ENCODE measurements at regions of chr2 and their contacts with region 1.

Region 1: DNA sequence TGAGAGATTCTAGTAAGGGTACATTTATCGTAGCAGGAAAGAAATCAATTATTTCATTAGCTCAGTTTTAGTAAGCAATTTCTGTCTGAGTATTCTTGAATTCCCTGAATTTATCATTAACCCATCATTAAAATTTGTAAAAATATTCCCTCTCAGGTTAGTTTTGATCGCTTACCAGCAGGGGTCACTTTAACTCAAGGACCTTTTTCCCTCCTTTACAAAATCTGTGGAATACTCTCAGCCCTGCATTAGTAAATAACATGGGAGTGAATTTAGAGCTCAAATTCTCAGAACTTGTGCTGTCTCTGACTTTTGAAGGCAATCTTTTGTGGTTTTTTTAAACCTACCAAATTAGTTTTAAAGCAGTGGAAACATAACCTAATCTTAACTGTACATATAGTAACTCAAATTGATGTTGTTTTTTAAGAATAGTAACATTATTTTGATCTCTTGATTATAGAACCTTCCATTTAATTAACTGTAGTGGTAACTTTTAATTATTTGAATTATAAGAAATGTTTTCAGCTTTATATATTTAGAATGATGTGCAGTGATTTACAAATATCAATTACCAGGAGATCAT is 97.2 kb downstream of the AGPS start:
- DNase-seq: no peak
- H3K4me3 ChIP-seq: no peak overlapping the region
- H3K27ac ChIP-seq: no peak overlapping the region
- H3K4me1 ChIP-seq: no peaks in the 10 kb centered on the region
- H3K27me3 ChIP-seq: no peaks in the 10 kb centered on the region
- CTCF ChIP-seq: peak in 1 of 3 experiments; percentile 36

Region 2: DNA sequence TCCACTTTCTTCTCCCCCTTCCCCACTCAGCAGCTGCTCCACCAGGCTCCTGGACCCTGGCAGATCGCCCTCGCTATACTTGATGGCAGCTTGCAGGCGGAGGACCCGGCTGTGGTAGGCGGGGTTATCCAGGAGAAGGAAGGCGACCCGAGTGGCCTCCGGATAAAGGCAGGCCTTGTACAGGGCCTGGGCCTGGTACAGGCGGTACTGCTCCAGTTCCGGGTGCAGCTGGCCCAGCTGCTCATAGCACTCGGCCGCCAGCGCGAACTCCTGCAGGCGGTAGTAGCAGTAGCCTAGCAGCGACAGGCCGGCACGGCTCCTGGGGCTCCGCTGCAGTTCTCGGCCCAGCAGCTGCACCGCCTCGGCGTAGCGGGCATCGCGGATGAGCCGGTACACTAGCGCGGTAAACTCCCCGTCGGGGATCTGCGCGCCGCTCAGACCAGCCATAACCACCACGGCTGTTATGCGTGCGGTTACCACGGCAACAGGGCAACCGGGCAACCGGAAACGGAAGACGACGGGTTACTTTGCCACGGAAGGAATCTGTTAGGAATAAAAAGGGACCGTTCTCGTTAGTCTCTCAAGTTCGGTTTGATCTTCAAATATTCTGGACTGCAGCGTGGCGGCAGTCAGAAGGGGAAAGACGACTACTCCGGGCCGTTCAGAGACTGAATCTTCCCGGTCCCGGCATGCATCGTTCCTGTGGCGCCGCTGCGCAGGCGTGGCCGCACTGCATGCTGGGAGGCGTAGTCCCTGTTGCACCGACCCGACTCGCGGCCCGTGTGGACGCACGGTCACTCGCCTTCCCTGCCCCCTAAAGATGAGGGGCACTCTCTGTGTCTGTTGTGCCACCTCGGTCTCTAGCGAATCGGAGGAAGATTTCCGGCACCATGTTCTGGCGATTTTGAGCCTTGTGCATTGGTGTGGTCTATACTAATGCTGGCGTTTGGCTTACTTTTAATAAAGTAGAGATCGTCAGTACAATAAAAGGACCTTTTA is 128.7 kb after region 1 on chr2:
- intact Hi-C with region 1: no loop called
- DNase-seq: peak; percentile 68 to 95
- H3K4me3 ChIP-seq: peak overlapping the region; percentile 65 to 86
- H3K27ac ChIP-seq: peak overlapping the region; percentile 89 to 96
- H3K4me1 ChIP-seq: no peaks in the 10 kb centered on the region
- H3K27me3 ChIP-seq: no peaks in the 10 kb centered on the region
- CTCF ChIP-seq: no peak

Region 3: DNA sequence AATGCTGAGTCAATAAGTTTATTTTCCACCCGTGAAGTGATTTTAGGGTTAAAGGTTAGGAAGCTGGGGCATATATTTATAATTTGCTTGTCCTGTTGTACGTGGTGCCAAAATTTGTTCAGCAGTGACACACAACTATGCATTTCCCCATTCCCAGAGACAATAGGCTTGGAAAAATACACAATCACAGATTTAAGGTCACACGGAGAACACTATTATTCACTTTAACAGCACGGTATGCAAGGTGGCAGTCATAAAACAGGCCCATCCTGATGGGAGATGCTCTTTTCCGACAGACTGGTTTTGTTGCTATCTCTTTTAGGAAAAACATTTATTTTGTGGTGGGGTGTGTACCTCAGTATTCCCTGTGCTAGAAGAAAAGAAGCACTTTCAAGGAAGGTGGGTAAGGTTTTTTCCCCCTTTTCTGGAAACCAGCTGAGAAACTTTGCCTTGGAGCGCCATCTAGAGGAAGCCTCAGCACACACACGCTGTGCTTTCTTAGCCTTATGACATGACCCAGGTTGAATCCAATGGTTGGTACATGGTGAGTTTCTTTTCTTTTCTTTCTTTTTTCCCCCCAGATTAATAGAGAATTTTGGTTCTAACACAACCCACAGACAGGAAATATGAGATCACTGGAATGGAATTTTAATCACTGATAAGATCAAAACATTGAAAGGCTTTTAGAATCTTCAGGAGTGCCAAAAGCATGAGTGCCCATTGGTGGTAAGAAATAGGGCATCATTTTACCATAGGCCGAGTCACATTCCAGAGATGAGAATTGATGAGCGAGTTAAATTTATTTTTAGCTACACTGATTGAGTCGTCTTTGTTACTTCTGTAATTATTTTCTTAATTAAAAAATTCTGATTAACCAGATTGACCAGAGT is 234.8 kb after region 1 on chr2:
- intact Hi-C with region 1: loop called (anchors 10 kb)
- DNase-seq: no peak
- H3K4me3 ChIP-seq: no peak overlapping the region
- H3K27ac ChIP-seq: no peak overlapping the region
- H3K4me1 ChIP-seq: no peaks in the 10 kb centered on the region
- H3K27me3 ChIP-seq: no peaks in the 10 kb centered on the region
- CTCF ChIP-seq: peak; percentile 27 to 74 (median 61)

Measured in ascending aorta (tissue), 2 donors.